Esophagus muscularis mucosa (tissue), 4 donors: ENCODE measurements at regions of chr4 and their contacts with region 1.

Region 1: DNA sequence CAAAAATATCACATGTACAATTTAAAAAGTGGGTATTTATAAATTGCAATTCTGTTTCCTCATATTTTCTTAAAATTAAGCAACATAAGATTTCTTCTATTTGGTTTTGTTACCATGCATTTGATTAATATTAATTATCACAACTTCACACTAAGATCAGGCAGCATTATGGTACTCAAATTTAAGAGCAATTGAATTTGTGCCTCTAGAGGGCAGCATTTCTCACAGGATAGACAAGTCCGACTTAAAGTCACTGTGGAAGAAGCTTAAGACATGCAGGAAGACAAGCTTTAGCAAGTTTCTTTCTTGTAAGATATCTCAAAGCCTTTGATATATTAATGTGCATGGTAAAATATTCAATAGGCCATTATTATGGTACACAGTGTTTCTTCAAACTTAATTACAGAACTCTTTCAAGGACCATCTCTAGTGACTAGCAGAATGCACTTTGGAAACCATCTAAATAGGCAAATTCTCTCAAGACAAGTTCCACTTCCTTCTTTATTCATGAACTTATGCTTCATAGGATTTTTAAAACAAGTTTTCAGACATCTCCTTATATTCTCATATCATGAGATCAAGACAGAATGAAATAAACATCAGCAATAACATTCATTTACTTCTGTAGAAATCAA is 35.0 kb downstream of the FBXW7 start:
- DNase-seq: no peak
- H3K4me3 ChIP-seq: no peak overlapping the region
- H3K27ac ChIP-seq: no peak overlapping the region
- H3K4me1 ChIP-seq: peaks cover 0 to 6% (median 3%) of the 10 kb centered on the region in 4 donors
- H3K27me3 ChIP-seq: no peaks in the 10 kb centered on the region
- CTCF ChIP-seq: peak; percentile 69 to 76 (median 73)
- EP300 ChIP-seq: no peak
- POLR2A ChIP-seq: no peak

Region 2: GRCh38 chr4:152735396-152735859 is 234.5 kb after region 1 on chr4:
- intact Hi-C with region 1: loop called (anchors 10 kb)
- DNase-seq: no peak
- H3K4me3 ChIP-seq: no peak overlapping the region
- H3K27ac ChIP-seq: no peak overlapping the region
- H3K4me1 ChIP-seq: no peaks in the 10 kb centered on the region
- H3K27me3 ChIP-seq: no peaks in the 10 kb centered on the region
- CTCF ChIP-seq: peak; percentile 34 to 47 (median 35)
- EP300 ChIP-seq: no peak
- POLR2A ChIP-seq: no peak